ENCODE measurements at regions of chr9 and their contacts with region 1.

Region 1: DNA sequence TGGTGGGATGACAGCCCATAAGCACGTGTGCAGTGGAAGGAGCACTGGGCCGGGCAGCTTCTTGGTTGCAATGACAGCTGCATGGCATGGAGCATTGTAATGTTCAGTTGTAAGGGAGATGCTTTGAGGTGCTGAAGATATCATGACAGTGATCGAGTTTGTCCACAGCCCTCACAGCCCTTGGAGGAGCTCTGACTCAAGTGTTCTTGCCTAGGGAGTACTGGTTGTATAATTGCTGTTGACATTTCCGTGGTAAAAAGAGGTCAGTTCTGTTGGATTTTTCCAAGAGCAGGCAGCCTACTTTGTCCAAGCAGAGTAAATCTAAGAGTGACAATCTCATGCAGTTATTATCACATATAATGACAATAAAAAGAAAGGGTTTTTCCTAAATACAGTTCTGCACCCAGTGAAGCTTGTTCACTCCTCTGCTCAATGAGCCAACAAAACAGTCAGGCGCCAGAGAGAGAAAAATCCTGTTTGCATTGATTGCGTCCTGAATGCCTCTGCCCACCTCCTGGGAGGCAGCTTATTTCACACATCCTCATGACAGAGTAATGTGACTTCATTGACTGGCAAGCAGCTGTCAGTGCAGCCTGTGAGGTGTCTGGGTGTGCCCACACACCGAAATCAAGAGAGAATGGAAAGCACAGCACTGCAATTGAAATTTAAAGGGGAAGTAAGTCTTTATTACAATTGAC is 248.0 kb downstream of the NTRK2 start:
- ATAC-seq: peak; percentile 70 to 99 (median 98)
- H3K4me3 ChIP-seq: no peak overlapping the region
- H3K27ac ChIP-seq: peak overlapping the region in 1 of 2 donors; percentile 5
- H3K4me1 ChIP-seq: peaks cover 18 to 19% of the 10 kb centered on the region in 2 donors

Region 2: GRCh38 chr9:84823421-84824271 is 93.9 kb before region 1 on chr9:
- in situ Hi-C with region 1: loop called in 1 of 9 experiments (anchors 25 kb)
- ATAC-seq: peak in 3 of 8 experiments; percentile 88 to 100 (median 99)
- H3K4me3 ChIP-seq: no peak overlapping the region
- H3K27ac ChIP-seq: no peak overlapping the region
- H3K4me1 ChIP-seq: peaks cover 16% of the 10 kb centered on the region in 2 donors

Region 3: GRCh38 chr9:84845956-84846900 is 71.3 kb before region 1 on chr9:
- in situ Hi-C with region 1: no loop called
- ATAC-seq: peak in 2 of 8 experiments; percentile 31 to 46
- H3K4me3 ChIP-seq: no peak overlapping the region
- H3K27ac ChIP-seq: no peak overlapping the region
- H3K4me1 ChIP-seq: peaks cover 26 to 27% of the 10 kb centered on the region in 2 donors

Measured in motor neuron (in vitro differentiated cells).